Common myeloid progenitor, CD34-positive (primary cell): ENCODE measurements at regions of chr4 and their contacts with region 1.

Region 1: GRCh38 chr4:74531963-74532794 is 87.2 kb downstream of the AREG start:
- DNase-seq: peak; percentile 69 to 76 (median 75)
- H3K4me3 ChIP-seq: no peak overlapping the region
- H3K27ac ChIP-seq: no peak overlapping the region
- H3K4me1 ChIP-seq: no peaks in the 10 kb centered on the region
- H3K27me3 ChIP-seq: no peaks in the 10 kb centered on the region

Region 2: GRCh38 chr4:74146581-74147129 is 385.5 kb before region 1 on chr4:
- CTCF ChIA-PET with region 1: no interaction called
- POLR2A ChIA-PET with region 1: no interaction called
- DNase-seq: no peak
- H3K4me3 ChIP-seq: no peak overlapping the region
- H3K27ac ChIP-seq: no peak overlapping the region
- H3K4me1 ChIP-seq: no peaks in the 10 kb centered on the region
- H3K27me3 ChIP-seq: no peaks in the 10 kb centered on the region

Region 3: DNA sequence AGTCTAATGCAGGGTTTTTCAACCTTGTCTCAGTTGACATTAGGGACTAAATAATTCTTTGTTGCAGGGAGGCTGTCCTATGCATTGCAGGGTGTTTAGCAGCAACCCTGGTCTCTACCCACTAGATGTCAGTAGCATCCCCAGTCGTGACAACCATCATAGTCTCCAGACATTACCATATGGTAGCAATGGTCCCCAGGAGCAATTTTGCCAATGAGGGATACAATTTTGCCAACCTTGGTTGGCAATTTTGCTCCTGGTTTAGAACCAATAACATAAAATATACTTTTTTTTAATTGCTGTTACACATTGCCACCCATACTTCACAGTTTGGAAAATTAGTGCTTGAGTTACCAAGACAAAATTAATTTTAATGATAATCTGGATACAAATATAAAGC is 161.3 kb before region 1 on chr4:
- CTCF ChIA-PET with region 1: interaction called, 87 read pairs
- POLR2A ChIA-PET with region 1: no interaction called
- DNase-seq: peak; percentile 75 to 83 (median 78)
- H3K4me3 ChIP-seq: no peak overlapping the region
- H3K27ac ChIP-seq: peak overlapping the region in 1 of 2 experiments; percentile 38
- H3K4me1 ChIP-seq: peaks cover 0 to 62% (median 16%) of the 10 kb centered on the region in 4 experiments
- H3K27me3 ChIP-seq: no peaks in the 10 kb centered on the region

Region 4: GRCh38 chr4:74397748-74398426 is 134.3 kb before region 1 on chr4:
- CTCF ChIA-PET with region 1: interaction called, 10 read pairs
- POLR2A ChIA-PET with region 1: no interaction called
- DNase-seq: peak; percentile 54 to 74 (median 68)
- H3K4me3 ChIP-seq: peak overlapping the region; percentile 43 to 84 (median 73)
- H3K27ac ChIP-seq: peak overlapping the region; percentile 83 to 90
- H3K4me1 ChIP-seq: peaks cover 0 to 11% (median 0%) of the 10 kb centered on the region in 4 experiments
- H3K27me3 ChIP-seq: no peaks in the 10 kb centered on the region

Region 5: GRCh38 chr4:74543231-74543670 is 11.1 kb after region 1 on chr4:
- CTCF ChIA-PET with region 1: interaction called, 10 read pairs
- POLR2A ChIA-PET with region 1: no interaction called
- DNase-seq: peak; percentile 52 to 91 (median 82)
- H3K4me3 ChIP-seq: peak overlapping the region in 4 of 7 experiments; percentile 2 to 48 (median 28)
- H3K27ac ChIP-seq: peak overlapping the region in 1 of 2 experiments; percentile 67
- H3K4me1 ChIP-seq: peaks cover 10 to 27% (median 11%) of the 10 kb centered on the region in 4 experiments
- H3K27me3 ChIP-seq: no peaks in the 10 kb centered on the region

Region 6: DNA sequence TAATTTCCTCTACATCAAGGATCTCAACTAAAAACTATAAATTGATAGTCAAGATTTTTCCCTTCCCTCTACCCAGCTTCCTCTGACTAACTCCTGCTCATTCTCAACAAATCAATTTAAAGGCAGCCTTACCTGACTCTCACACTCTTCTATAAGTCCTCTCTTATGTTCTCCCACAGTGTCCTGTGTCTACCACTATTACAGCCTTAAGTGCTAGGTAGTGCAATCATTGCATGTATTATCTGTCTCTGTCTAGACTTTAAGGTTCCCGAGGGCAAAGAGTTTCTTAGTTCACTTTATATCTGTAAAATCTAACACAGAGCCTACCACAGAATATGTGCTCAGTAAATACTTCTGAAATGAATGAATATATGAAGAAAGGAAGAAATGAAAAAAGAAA is 138.4 kb after region 1 on chr4:
- CTCF ChIA-PET with region 1: interaction called, 66 read pairs
- POLR2A ChIA-PET with region 1: no interaction called
- DNase-seq: no peak
- H3K4me3 ChIP-seq: no peak overlapping the region
- H3K27ac ChIP-seq: no peak overlapping the region
- H3K4me1 ChIP-seq: peaks cover 0 to 13% (median 4%) of the 10 kb centered on the region in 4 experiments
- H3K27me3 ChIP-seq: no peaks in the 10 kb centered on the region